Natural killer cell (primary cell): ENCODE measurements at regions of chr21 and their contacts with region 1.

Region 1: GRCh38 chr21:36429947-36430546 is 44.9 kb downstream of the CHAF1B start:
- DNase-seq: peak; percentile 65 to 79
- ATAC-seq: peak; percentile 88 to 92 (median 92)
- H3K4me3 ChIP-seq: peak overlapping the region; percentile 25
- H3K4me3 Mint-ChIP-seq: peak overlapping the region; percentile 87
- H3K27ac ChIP-seq: peak overlapping the region; percentile 81
- H3K27ac Mint-ChIP-seq: peak overlapping the region; percentile 92 to 94
- H3K4me1 ChIP-seq: peaks cover 19% of the 10 kb centered on the region
- H3K4me1 Mint-ChIP-seq: peaks cover 15 to 30% of the 10 kb centered on the region in 2 donors
- H3K27me3 ChIP-seq: no peaks in the 10 kb centered on the region
- H3K27me3 Mint-ChIP-seq: peaks cover 0 to 5% of the 10 kb centered on the region in 2 donors
- CTCF ChIP-seq: peak; percentile 17

Region 2: DNA sequence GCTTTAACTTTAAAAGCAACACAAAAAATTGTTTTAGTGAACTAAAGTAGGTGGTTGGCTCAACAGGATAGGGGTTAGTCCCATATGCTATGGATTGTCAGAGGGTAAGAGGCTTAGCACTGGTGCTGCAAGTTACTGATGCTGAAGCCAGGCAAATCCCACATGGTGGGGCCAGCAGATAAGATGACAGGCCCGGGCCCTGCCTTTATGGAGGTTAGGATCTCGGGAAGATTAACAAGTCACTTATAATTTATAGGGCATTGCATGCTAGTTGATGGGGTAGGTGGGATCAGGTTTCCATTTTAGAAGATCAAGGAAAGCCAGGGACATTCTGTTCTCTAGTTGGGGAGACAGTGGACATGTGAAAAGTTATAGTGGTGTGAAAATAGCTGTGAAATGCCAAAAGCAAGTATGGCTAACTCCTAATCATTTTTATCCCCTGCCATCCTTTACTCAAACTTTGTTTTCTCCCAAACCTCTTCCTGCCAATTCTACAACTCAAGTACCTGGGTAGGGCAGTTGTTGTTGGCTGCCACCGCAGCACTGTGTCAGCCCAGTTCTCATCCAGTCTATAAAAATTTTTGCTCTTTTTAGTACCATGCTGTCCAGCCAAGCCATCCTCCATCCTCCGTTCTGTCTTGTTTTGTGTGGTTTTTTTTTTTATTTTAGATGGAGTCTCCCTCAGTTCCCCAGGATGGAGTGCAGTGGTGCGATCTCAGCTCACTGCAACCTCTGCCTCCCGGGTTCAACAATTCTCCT is 34.5 kb before region 1 on chr21:
- intact Hi-C with region 1: loop called (anchors 2 kb)
- DNase-seq: no peak
- ATAC-seq: no peak
- H3K4me3 ChIP-seq: no peak overlapping the region
- H3K4me3 Mint-ChIP-seq: no peak overlapping the region
- H3K27ac ChIP-seq: no peak overlapping the region
- H3K27ac Mint-ChIP-seq: no peak overlapping the region
- H3K4me1 ChIP-seq: no peaks in the 10 kb centered on the region
- H3K4me1 Mint-ChIP-seq: peaks cover 0 to 7% of the 10 kb centered on the region in 2 donors
- H3K27me3 ChIP-seq: no peaks in the 10 kb centered on the region
- H3K27me3 Mint-ChIP-seq: no peaks in the 10 kb centered on the region
- CTCF ChIP-seq: no peak